B cell (primary cell): ENCODE measurements at regions of chr14 and their contacts with region 1.

Region 1: GRCh38 chr14:103679351-103679750 is 35.9 kb downstream of the XRCC3 start:
- DNase-seq: peak; percentile 78
- ATAC-seq: peak; percentile 97
- H3K4me3 ChIP-seq: no peak overlapping the region
- H3K4me3 Mint-ChIP-seq: no peak overlapping the region
- H3K27ac ChIP-seq: peak overlapping the region in 1 of 2 donors; percentile 59
- H3K27ac Mint-ChIP-seq: peak overlapping the region; percentile 67
- H3K4me1 ChIP-seq: peaks cover 8 to 11% of the 10 kb centered on the region in 2 donors
- H3K4me1 Mint-ChIP-seq: peaks cover 14% of the 10 kb centered on the region
- H3K27me3 ChIP-seq: no peaks in the 10 kb centered on the region
- H3K27me3 Mint-ChIP-seq: no peaks in the 10 kb centered on the region
- CTCF ChIP-seq: peak; percentile 77

Region 2: DNA sequence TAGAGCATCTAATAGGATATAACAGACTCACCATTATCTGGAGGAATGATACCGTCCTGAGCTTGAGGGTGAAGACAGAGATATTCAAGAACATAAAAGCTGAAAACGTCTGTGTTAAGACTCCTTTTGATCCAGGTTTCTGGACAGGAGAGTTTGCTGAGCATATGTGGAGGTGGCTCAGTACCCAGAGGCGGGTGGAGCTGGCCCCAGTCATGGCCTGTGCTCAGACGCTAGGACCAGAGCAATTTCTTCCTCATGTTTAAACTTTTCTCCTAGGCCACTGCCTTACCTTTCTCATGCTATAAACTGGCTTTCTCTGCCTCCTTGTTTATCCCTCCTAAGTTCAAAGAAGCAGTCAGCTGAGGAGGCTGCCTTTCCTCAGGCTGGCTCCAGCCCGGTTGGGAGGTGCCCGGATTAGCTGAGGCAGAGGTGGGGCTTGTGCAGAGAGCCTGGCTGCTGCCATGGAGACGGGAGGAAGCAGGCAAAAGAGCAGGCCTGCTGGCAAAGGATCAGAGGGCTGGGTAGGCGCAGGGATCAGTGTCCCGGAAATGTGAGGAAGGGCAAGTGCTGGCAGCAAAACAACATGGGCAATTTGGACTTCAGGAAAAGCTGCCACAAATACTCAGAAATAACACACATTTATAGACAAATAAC is 102.9 kb before region 1 on chr14:
- CTCF ChIA-PET with region 1: interaction called, 30 read pairs
- POLR2A ChIA-PET with region 1: no interaction called
- intact Hi-C with region 1: loop called (anchors 1 kb)
- DNase-seq: no peak
- ATAC-seq: no peak
- H3K4me3 ChIP-seq: no peak overlapping the region
- H3K4me3 Mint-ChIP-seq: no peak overlapping the region
- H3K27ac ChIP-seq: no peak overlapping the region
- H3K27ac Mint-ChIP-seq: no peak overlapping the region
- H3K4me1 ChIP-seq: no peaks in the 10 kb centered on the region
- H3K4me1 Mint-ChIP-seq: no peaks in the 10 kb centered on the region
- H3K27me3 ChIP-seq: no peaks in the 10 kb centered on the region
- H3K27me3 Mint-ChIP-seq: no peaks in the 10 kb centered on the region
- CTCF ChIP-seq: no peak

Region 3: GRCh38 chr14:103606963-103607668 is 72.2 kb before region 1 on chr14:
- CTCF ChIA-PET with region 1: interaction called, 6 read pairs
- POLR2A ChIA-PET with region 1: no interaction called
- intact Hi-C with region 1: loop called (anchors 1 kb)
- DNase-seq: peak; percentile 68
- ATAC-seq: peak; percentile 70
- H3K4me3 ChIP-seq: peak overlapping the region in 4 of 5 experiments; percentile 14 to 55 (median 31)
- H3K4me3 Mint-ChIP-seq: peak overlapping the region; percentile 91
- H3K27ac ChIP-seq: no peak overlapping the region
- H3K27ac Mint-ChIP-seq: no peak overlapping the region
- H3K4me1 ChIP-seq: peaks cover 19 to 20% of the 10 kb centered on the region in 2 donors
- H3K4me1 Mint-ChIP-seq: peaks cover 14% of the 10 kb centered on the region
- H3K27me3 ChIP-seq: peaks cover 0 to 35% (median 9%) of the 10 kb centered on the region in 4 experiments
- H3K27me3 Mint-ChIP-seq: peaks cover 8% of the 10 kb centered on the region
- CTCF ChIP-seq: peak; percentile 29